ENCODE measurements at regions of chr4 and their contacts with region 1.

Region 1: GRCh38 chr4:75673027-75673958 is at the start of gene G3BP2:
- DNase-seq: peak; percentile 90
- ATAC-seq: peak; percentile 91
- H3K4me3 Mint-ChIP-seq: peak within 1 kb of the TSS; percentile 100
- H3K27ac Mint-ChIP-seq: peak within 1 kb of the TSS; percentile 100
- H3K4me1 Mint-ChIP-seq: peaks cover 47% of the 10 kb centered on the region
- H3K27me3 Mint-ChIP-seq: no peaks in the 10 kb centered on the region
- CTCF ChIP-seq: no peak
- total RNA-seq, gene G3BP2: 98.2 and 103 TPM in 2 replicates

Region 2: GRCh38 chr4:75514131-75514948 is 159.0 kb before region 1 on chr4 and contains the starts of genes RCHY1 and THAP6:
- CTCF ChIA-PET with region 1: no interaction called
- POLR2A ChIA-PET with region 1: interaction called, 5 read pairs
- intact Hi-C with region 1: loop called (anchors 1 kb)
- DNase-seq: peak; percentile 88
- ATAC-seq: peak; percentile 87
- H3K4me3 Mint-ChIP-seq: no peak within 1 kb of the TSS
- H3K27ac Mint-ChIP-seq: peak within 1 kb of the TSS; percentile 95
- H3K4me1 Mint-ChIP-seq: peaks cover 39% of the 10 kb centered on the region
- H3K27me3 Mint-ChIP-seq: no peaks in the 10 kb centered on the region
- CTCF ChIP-seq: no peak
- total RNA-seq, gene RCHY1: 28.5 and 29.6 TPM in 2 replicates
- total RNA-seq, gene THAP6: 17.4 and 24.6 TPM in 2 replicates

Region 3: GRCh38 chr4:75653845-75654503 is 19.3 kb before region 1 on chr4:
- CTCF ChIA-PET with region 1: interaction called, 4 read pairs
- POLR2A ChIA-PET with region 1: interaction called, 8 read pairs
- intact Hi-C with region 1: loop called (anchors 1 kb)
- DNase-seq: no peak
- ATAC-seq: no peak
- H3K4me3 Mint-ChIP-seq: no peak overlapping the region
- H3K27ac Mint-ChIP-seq: no peak overlapping the region
- H3K4me1 Mint-ChIP-seq: peaks cover 31% of the 10 kb centered on the region
- H3K27me3 Mint-ChIP-seq: no peaks in the 10 kb centered on the region
- CTCF ChIP-seq: no peak

Region 4: DNA sequence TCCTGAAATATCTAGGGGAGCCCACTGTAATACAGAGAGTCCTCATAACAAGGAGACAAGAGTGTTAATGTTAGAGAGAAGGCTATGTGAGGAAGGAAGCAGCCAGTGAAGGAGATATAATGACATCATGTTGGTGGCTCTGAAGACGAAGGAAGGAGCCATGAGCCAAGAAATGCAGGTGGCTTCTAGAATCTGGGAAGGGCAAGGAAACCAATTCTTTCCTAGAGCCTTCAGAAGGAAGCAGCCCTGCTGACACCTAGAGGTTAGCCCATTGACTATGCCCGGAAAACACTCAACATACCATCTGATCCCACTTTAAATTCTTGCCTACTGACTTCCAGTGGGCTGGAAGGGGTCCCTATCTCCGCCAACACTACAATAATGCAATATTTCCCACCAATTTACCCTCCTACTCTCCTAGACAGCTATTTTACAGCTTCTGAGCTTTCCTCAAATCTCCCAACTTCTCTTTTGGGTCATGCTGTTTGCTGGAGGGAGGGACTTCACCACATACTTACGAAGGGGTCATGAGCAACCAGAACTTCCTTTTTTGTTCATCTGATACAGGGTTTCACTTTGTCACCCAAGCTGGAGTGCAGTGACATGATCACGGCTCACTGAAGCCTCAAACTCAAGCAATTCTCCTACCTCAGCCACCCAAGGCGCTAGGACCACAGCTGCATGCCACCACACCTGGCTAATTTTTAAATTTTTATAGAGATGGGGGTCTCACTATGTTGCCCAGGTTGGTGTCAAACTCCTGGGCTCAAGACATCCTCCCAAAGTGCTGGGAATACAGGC is 25.1 kb after region 1 on chr4:
- CTCF ChIA-PET with region 1: no interaction called
- POLR2A ChIA-PET with region 1: interaction called, 50 read pairs
- intact Hi-C with region 1: loop called (anchors 1 kb)
- DNase-seq: peak; percentile 21
- ATAC-seq: peak; percentile 96
- H3K4me3 Mint-ChIP-seq: peak overlapping the region; percentile 44
- H3K27ac Mint-ChIP-seq: peak overlapping the region; percentile 90
- H3K4me1 Mint-ChIP-seq: peaks cover 38% of the 10 kb centered on the region
- H3K27me3 Mint-ChIP-seq: no peaks in the 10 kb centered on the region
- CTCF ChIP-seq: no peak

Region 5: DNA sequence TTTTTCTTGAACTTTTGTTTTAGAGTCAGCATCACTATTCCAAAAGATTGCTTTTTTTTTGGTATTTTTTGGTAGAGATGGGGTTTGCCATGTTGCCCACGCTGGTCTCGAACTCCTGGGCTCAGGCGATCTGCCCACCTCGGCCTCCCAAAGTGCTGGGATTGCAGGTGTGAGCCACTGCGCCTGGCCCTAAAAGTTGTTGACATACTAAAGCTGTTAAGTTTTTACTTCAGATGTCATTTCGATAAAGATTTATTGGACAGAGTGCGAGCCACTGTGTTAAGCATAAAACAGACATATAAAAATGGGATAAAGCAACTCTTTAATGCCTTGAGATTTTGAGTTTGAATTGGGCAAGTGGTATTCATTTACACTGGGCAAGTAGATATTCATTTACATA is 79.3 kb after region 1 on chr4:
- CTCF ChIA-PET with region 1: no interaction called
- POLR2A ChIA-PET with region 1: interaction called, 10 read pairs
- intact Hi-C with region 1: no loop called
- DNase-seq: no peak
- ATAC-seq: no peak
- H3K4me3 Mint-ChIP-seq: no peak overlapping the region
- H3K27ac Mint-ChIP-seq: no peak overlapping the region
- H3K4me1 Mint-ChIP-seq: peaks cover 2% of the 10 kb centered on the region
- H3K27me3 Mint-ChIP-seq: no peaks in the 10 kb centered on the region
- CTCF ChIP-seq: no peak